Heart right ventricle (tissue), 16 donors: ENCODE measurements at regions of chr19 and their contacts with region 1.

Region 1: DNA sequence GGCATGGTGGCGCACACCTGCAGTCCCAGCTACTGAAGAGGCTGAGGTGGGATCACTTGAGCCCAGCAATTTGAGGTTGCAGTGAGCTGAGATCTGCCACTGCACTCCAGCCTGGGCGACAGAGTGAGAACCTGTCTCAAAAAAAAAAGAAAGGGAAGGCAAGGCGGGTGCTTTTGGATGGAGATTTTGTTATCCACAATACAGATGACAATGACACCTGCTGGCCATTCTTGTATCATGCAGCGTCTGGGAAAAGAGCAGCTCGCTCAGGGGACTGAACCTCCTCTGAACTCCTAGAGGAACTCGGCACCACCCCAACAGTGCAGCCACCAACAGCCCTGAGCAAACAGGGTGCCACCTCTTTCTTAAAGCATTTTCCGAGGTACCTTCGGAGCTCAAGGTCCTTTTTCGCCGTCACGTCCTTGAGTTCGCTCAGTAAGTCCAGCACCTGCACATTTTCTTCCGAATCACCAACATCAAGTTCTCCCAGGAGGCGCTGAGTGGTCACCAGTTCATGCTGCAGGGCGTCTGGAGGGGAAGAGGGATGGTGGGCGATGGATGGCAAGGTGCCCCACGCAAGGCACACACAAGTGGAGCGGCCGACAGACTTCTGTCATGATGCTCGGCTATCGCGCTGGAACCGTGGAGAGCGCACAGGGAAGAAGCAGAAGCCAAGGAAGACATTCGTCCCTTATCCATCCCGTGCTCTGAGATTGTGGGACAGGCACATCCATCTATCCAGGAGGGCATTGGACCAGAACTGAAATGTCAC is 22.6 kb downstream of the HAUS8 start:
- DNase-seq: peak in 1 of 2 donors; percentile 31
- ATAC-seq: peak in 7 of 8 donors; percentile 42 to 73 (median 62)
- H3K4me3 ChIP-seq: no peak overlapping the region
- H3K27ac ChIP-seq: no peak overlapping the region
- H3K4me1 ChIP-seq: no peaks in the 10 kb centered on the region
- H3K27me3 ChIP-seq: no peaks in the 10 kb centered on the region
- CTCF ChIP-seq: peak; percentile 39 to 79 (median 68)

Region 2: GRCh38 chr19:16714702-16715287 is 337.8 kb before region 1 on chr19:
- intact Hi-C with region 1: loop called in 1 of 10 experiments (anchors 5 kb)
- DNase-seq: peak; percentile 8 to 47
- ATAC-seq: no peak
- H3K4me3 ChIP-seq: no peak overlapping the region
- H3K27ac ChIP-seq: no peak overlapping the region
- H3K4me1 ChIP-seq: peaks cover 0 to under 1% (median 0%) of the 10 kb centered on the region in 9 donors
- H3K27me3 ChIP-seq: no peaks in the 10 kb centered on the region
- CTCF ChIP-seq: peak; percentile 42 to 75 (median 69)

Region 3: DNA sequence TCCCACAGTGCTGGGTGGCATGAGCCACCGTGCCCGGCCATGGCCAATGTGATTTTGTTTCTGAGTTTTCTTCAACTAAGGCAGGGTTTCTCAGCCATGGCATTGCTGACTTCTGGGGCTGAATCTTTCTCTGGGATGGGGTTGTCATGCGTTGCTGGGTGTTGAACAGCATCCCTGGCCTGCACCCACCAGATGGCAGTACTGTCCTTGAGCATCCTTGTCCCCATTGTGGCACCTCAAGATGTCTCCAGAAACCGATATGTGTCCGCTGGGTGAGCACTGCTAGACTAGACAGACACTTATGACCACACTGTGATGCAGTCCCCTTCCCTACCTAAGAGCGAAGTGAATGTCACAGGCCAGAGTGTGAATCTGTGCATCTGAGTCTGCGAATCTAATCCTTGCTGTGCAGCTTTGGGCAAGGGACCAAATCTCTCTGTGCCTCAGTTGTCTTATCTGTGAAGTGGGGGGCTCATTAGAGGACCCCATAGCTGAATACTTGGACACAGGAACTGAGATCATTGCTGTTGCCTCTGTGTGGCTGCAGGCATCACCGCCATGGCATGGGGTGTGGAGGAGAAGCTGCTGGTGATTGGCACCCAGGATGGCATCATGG is 273.7 kb before region 1 on chr19:
- intact Hi-C with region 1: loop called in 4 of 10 experiments (anchors 2 to 5 kb)
- DNase-seq: peak; percentile 20 to 33
- ATAC-seq: peak in 2 of 8 donors; percentile 59 to 72
- H3K4me3 ChIP-seq: no peak overlapping the region
- H3K27ac ChIP-seq: no peak overlapping the region
- H3K4me1 ChIP-seq: no peaks in the 10 kb centered on the region
- H3K27me3 ChIP-seq: peaks cover 0 to 17% (median 0%) of the 10 kb centered on the region in 7 donors
- CTCF ChIP-seq: peak; percentile 12 to 64 (median 44)

Region 4: DNA sequence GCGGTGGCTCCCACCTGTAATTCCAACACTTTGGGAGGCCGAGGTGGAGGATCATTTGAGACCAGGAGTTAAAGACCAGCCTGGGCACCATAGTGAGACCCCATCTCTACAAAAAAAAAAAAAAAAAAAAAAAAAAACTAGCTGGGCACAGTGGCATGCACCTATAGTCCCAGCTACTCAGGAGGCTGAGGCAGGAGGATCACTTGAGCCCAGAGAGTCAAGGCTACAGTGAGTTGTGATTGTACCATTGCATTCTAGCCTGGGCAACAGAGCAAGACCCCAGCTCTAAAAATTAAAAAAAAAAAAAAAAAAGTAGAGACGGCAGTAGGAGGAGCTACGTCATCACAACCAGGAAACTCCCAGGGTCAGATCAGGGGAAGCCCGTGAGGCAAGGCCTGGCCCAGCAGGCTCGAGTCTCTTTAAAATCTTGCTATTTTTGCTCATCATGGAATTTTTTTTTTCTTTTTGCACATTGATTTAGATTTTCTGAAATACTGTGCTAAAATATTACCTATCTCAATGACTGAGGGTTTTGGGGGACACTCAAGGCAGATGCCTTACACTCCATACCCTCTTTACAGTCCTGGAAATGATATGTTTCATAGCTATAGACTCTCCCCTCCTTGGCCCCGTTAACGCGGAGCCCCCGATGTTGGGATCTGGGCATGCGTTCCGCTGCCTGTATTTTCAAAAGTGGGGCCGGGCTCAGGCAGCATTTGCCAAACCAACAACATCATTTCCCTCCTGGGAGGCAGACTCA is 118.1 kb after region 1 on chr19:
- intact Hi-C with region 1: no loop called
- DNase-seq: no peak
- ATAC-seq: no peak
- H3K4me3 ChIP-seq: no peak overlapping the region
- H3K27ac ChIP-seq: no peak overlapping the region
- H3K4me1 ChIP-seq: no peaks in the 10 kb centered on the region
- H3K27me3 ChIP-seq: no peaks in the 10 kb centered on the region
- CTCF ChIP-seq: no peak